HepG2 (cell line): ENCODE measurements at regions of chr3 and their contacts with region 1.

Region 1: GRCh38 chr3:167813169-167814123 is 77.9 kb downstream of the SERPINI1 start:
- DNase-seq: peak; percentile 69
- ATAC-seq: peak; percentile 86
- H3K4me3 ChIP-seq: peak overlapping the region; percentile 13 to 45 (median 32); a peak in 4 of 6 replicates
- H3K27ac ChIP-seq: peak overlapping the region; percentile 53
- H3K4me1 ChIP-seq: peaks cover 39% of the 10 kb centered on the region
- H3K27me3 ChIP-seq: no peaks in the 10 kb centered on the region
- CTCF ChIP-seq: no peak
- EP300 ChIP-seq: peak in 1 of 2 experiments; percentile 69; a peak in 2 of 4 replicates
- POLR2A ChIP-seq: no peak
- RAD21 ChIP-seq: no peak

Region 2: DNA sequence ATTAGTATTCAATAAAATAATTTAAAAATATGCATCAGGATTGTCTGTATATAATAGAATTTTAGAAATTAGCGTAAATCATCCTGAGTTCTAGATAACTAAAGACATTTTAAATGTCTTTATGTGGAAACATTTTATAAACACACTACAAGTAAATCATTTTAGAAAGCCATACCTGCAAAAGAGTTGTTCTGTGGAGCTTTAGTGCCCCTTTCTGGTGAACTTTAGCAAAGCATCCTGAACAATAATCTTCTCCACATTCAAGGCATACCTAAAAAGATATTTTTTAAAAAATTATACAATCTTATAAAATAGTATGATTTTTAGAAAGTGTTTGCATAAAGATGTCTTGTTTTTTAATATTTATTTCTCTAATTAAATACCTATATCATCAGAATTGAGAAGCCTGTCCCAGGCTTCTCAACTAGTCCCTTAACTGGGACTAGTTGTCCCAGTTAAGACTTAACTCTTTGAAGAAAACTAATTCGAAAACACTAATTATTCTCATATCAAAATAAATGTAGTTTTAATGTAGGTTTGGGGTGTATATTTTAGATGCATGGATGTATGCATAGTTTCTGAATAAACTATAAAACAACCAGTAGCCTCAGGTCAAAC is 463.1 kb before region 1 on chr3:
- CTCF ChIA-PET with region 1: no interaction called
- POLR2A ChIA-PET with region 1: no interaction called
- in situ Hi-C with region 1: no loop called
- intact Hi-C with region 1: no loop called
- DNase-seq: peak; percentile 5
- ATAC-seq: no peak
- H3K4me3 ChIP-seq: no peak overlapping the region
- H3K27ac ChIP-seq: no peak overlapping the region
- H3K4me1 ChIP-seq: no peaks in the 10 kb centered on the region
- H3K27me3 ChIP-seq: no peaks in the 10 kb centered on the region
- CTCF ChIP-seq: peak; percentile 51
- EP300 ChIP-seq: no peak
- POLR2A ChIP-seq: no peak
- RAD21 ChIP-seq: peak; percentile 22; the same call in 1 of the 2 replicates

Region 3: DNA sequence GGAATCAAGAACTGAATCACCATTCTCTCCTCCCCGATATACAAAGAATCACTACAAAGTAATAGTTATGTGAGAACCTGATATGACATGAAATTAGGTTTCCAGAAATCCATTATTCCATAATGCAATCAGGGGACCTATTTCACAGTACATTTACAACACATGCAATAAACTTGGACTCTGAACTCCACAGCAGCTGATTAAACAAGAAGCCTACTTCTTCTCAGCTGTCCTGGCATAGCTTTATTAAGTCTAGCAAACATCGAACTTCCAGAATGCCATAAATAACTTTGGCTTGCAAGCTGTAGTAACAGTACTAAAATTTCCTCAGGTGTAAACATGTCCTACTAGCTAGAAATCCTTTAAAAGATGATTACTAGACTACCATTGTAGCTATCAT is 96.5 kb before region 1 on chr3:
- CTCF ChIA-PET with region 1: no interaction called
- POLR2A ChIA-PET with region 1: no interaction called
- in situ Hi-C with region 1: no loop called
- intact Hi-C with region 1: no loop called
- DNase-seq: peak; percentile 89
- ATAC-seq: peak; percentile 83
- H3K4me3 ChIP-seq: no peak overlapping the region
- H3K27ac ChIP-seq: peak overlapping the region; percentile 18
- H3K4me1 ChIP-seq: peaks cover 14% of the 10 kb centered on the region
- H3K27me3 ChIP-seq: no peaks in the 10 kb centered on the region
- CTCF ChIP-seq: no peak
- EP300 ChIP-seq: peak in 1 of 2 experiments; percentile 43; a peak in 3 of 4 replicates
- POLR2A ChIP-seq: no peak
- RAD21 ChIP-seq: no peak

Region 4: DNA sequence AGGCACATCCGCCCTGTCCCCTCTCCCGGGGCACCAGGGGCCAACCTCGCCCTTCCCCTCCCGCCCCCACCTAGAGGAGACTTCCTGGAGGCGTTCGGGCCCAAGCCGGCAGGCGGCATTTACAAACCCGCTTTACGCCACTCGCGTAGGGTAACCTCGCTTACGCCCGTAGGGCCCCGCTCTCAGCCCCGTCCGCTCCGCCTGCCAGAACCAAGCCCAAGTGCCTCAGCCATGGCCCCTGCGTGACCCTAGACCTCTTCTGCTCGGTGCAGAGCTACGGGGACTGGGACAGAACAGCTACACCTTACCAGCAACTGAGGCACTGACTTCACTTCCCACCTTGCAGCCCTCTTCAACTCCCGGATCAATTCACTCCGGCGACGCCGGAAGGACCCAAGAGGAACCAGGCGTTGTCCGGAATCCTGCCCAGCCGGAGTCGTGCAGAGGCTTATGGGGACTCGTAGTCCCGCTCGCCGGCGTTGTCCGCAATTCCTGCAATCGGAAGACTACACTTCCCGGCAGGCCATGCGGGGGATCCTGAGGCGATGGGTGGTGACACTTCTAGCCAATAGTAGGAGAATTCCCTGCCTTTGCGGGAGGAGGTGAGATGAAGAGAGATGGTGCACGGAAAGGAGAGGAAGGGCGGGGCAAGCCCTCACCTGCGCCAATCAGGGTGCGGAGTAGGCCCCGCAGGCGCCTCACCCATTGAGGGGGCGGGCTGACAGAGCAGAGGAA is 78.8 kb before region 1 on chr3 and contains the start of gene PDCD10:
- CTCF ChIA-PET with region 1: no interaction called
- POLR2A ChIA-PET with region 1: no interaction called
- in situ Hi-C with region 1: no loop called
- intact Hi-C with region 1: loop called (anchors 2 kb)
- DNase-seq: peak; percentile 99
- ATAC-seq: peak; percentile 92
- H3K4me3 ChIP-seq: peak within 1 kb of the TSS; percentile 95 to 98 (median 98)
- H3K27ac ChIP-seq: peak within 1 kb of the TSS; percentile 97
- H3K4me1 ChIP-seq: peaks cover 69% of the 10 kb centered on the region
- H3K27me3 ChIP-seq: peaks cover 0 to 4% of the 10 kb centered on the region in 2 experiments; a peak in 1 of 5 replicates
- CTCF ChIP-seq: 0 out of 2 replicates have a peak, but pooled peaks have one; percentile 12
- EP300 ChIP-seq: no peak
- POLR2A ChIP-seq: peak; percentile 80 to 91
- RAD21 ChIP-seq: no peak
- total RNA-seq, gene PDCD10: 53.9 and 84.4 TPM in 2 replicates

Region 5: DNA sequence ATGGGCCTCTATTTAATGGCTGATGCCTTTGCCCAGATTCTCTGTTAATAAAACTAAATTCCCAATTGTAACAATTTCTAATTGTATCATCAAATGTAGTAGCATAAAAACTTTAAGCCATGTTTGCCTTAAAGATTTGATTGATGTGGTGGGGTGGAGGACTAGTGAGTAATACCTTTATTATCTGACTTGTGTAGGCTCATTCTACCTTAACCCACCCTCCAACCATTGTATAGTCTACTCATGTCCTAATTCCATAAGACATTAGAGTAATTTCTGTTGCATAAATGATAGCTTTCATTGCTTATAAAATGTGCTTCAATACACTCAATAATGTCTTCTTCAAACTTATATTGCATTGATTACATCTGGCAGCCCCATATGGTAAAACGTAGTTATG is 52.1 kb before region 1 on chr3:
- CTCF ChIA-PET with region 1: no interaction called
- POLR2A ChIA-PET with region 1: no interaction called
- in situ Hi-C with region 1: no loop called
- intact Hi-C with region 1: loop called (anchors 1 kb)
- DNase-seq: no peak
- ATAC-seq: no peak
- H3K4me3 ChIP-seq: no peak overlapping the region
- H3K27ac ChIP-seq: no peak overlapping the region
- H3K4me1 ChIP-seq: peaks cover 12% of the 10 kb centered on the region
- H3K27me3 ChIP-seq: no peaks in the 10 kb centered on the region
- CTCF ChIP-seq: no peak
- EP300 ChIP-seq: no peak
- POLR2A ChIP-seq: no peak
- RAD21 ChIP-seq: no peak

Region 6: GRCh38 chr3:168100777-168101492 is 287.5 kb after region 1 on chr3:
- CTCF ChIA-PET with region 1: no interaction called
- POLR2A ChIA-PET with region 1: no interaction called
- in situ Hi-C with region 1: no loop called
- intact Hi-C with region 1: loop called (anchors 5 kb)
- DNase-seq: no peak
- ATAC-seq: no peak
- H3K4me3 ChIP-seq: no peak overlapping the region
- H3K27ac ChIP-seq: no peak overlapping the region
- H3K4me1 ChIP-seq: peaks cover 14% of the 10 kb centered on the region
- H3K27me3 ChIP-seq: no peaks in the 10 kb centered on the region
- CTCF ChIP-seq: no peak
- EP300 ChIP-seq: no peak
- POLR2A ChIP-seq: no peak
- RAD21 ChIP-seq: no peak